ENCODE measurements at regions of chr5 and their contacts with region 1.

Region 1: DNA sequence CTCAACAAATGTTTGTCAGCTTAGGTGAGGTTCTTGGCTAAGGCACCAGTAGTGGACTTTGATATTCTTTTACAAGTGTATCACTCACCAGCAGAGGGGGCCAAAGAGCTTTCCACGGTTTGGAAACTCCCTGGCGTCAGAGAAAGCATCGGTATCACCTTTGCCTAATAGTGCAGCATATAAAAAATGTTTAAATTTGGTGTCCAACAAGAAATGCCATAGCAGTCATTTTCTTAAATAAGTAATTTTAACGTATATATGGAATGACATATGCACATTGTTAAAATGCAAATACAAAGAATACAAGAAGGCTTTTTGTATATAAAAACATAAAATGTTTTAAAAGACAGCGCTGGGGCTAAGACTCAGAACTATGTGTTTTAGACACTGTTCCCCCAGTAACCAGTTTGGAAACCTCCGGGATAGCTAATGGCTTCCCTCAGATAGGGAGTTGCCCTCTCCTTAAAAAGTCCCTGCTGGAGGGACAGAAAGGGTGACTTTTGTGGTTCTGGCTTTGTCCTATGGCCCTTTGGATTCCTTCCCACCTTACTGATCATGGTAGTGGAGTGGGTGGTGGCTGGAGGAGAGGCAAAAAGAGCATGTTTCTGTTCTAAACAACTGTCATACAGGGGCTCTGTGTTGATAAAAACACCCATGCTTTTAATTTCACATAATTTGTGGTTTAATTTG is 124.6 kb downstream of the GPBP1 start:
- DNase-seq: peak; percentile 92
- H3K4me3 Mint-ChIP-seq: no peak overlapping the region
- H3K27ac Mint-ChIP-seq: peak overlapping the region; percentile 40
- H3K4me1 Mint-ChIP-seq: peaks cover 53% of the 10 kb centered on the region
- H3K27me3 Mint-ChIP-seq: no peaks in the 10 kb centered on the region
- CTCF ChIP-seq: peak; percentile 64

Region 2: GRCh38 chr5:57494104-57495098 is 196.0 kb after region 1 on chr5:
- CTCF ChIA-PET with region 1: interaction called, 6 read pairs
- intact Hi-C with region 1: loop called (anchors 1 kb)
- DNase-seq: peak; percentile 93
- H3K4me3 Mint-ChIP-seq: peak overlapping the region; percentile 51
- H3K27ac Mint-ChIP-seq: peak overlapping the region; percentile 96
- H3K4me1 Mint-ChIP-seq: peaks cover 69% of the 10 kb centered on the region
- H3K27me3 Mint-ChIP-seq: no peaks in the 10 kb centered on the region
- CTCF ChIP-seq: no peak

Region 3: GRCh38 chr5:57692582-57693487 is 394.4 kb after region 1 on chr5:
- CTCF ChIA-PET with region 1: no interaction called
- intact Hi-C with region 1: loop called (anchors 2 kb)
- DNase-seq: peak; percentile 86
- H3K4me3 Mint-ChIP-seq: peak overlapping the region; percentile 71
- H3K27ac Mint-ChIP-seq: peak overlapping the region; percentile 98
- H3K4me1 Mint-ChIP-seq: peaks cover 51% of the 10 kb centered on the region
- H3K27me3 Mint-ChIP-seq: no peaks in the 10 kb centered on the region
- CTCF ChIP-seq: no peak

Region 4: GRCh38 chr5:57779383-57780223 is 481.2 kb after region 1 on chr5:
- CTCF ChIA-PET with region 1: interaction called, 9 read pairs
- intact Hi-C with region 1: loop called (anchors 2 kb)
- DNase-seq: peak; percentile 60
- H3K4me3 Mint-ChIP-seq: no peak overlapping the region
- H3K27ac Mint-ChIP-seq: peak overlapping the region; percentile 22
- H3K4me1 Mint-ChIP-seq: peaks cover 59% of the 10 kb centered on the region
- H3K27me3 Mint-ChIP-seq: no peaks in the 10 kb centered on the region
- CTCF ChIP-seq: peak; percentile 44

Region 5: GRCh38 chr5:57887851-57888621 is 589.6 kb after region 1 on chr5:
- CTCF ChIA-PET with region 1: interaction called, 6 read pairs
- intact Hi-C with region 1: loop called (anchors 1 kb)
- DNase-seq: peak; percentile 53
- H3K4me3 Mint-ChIP-seq: no peak overlapping the region
- H3K27ac Mint-ChIP-seq: no peak overlapping the region
- H3K4me1 Mint-ChIP-seq: peaks cover 17% of the 10 kb centered on the region
- H3K27me3 Mint-ChIP-seq: no peaks in the 10 kb centered on the region
- CTCF ChIP-seq: no peak

Region 6: DNA sequence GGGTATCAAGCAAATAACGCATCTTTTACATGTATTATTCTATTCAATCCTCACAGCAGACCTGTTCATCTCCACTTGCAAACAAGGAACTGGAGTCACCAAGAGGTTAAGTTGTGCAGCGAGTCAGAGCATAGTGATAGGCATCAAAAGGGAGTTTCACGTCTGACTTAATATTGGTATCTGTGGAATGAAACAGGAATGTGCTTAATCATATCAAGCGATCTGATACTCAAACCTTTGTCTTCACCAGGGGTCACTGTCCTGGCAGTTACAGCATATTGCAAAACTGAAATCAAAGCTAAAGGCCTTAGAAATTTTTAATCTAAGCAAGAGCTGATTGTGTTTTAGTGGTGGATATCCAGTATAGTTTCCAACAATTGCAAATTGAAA is 889.8 kb after region 1 on chr5:
- CTCF ChIA-PET with region 1: no interaction called
- intact Hi-C with region 1: loop called (anchors 10 kb)
- DNase-seq: peak; percentile 55
- H3K4me3 Mint-ChIP-seq: no peak overlapping the region
- H3K27ac Mint-ChIP-seq: no peak overlapping the region
- H3K4me1 Mint-ChIP-seq: peaks cover 42% of the 10 kb centered on the region
- H3K27me3 Mint-ChIP-seq: no peaks in the 10 kb centered on the region
- CTCF ChIP-seq: no peak